ENCODE measurements at regions of chr10 and their contacts with region 1.

Region 1: DNA sequence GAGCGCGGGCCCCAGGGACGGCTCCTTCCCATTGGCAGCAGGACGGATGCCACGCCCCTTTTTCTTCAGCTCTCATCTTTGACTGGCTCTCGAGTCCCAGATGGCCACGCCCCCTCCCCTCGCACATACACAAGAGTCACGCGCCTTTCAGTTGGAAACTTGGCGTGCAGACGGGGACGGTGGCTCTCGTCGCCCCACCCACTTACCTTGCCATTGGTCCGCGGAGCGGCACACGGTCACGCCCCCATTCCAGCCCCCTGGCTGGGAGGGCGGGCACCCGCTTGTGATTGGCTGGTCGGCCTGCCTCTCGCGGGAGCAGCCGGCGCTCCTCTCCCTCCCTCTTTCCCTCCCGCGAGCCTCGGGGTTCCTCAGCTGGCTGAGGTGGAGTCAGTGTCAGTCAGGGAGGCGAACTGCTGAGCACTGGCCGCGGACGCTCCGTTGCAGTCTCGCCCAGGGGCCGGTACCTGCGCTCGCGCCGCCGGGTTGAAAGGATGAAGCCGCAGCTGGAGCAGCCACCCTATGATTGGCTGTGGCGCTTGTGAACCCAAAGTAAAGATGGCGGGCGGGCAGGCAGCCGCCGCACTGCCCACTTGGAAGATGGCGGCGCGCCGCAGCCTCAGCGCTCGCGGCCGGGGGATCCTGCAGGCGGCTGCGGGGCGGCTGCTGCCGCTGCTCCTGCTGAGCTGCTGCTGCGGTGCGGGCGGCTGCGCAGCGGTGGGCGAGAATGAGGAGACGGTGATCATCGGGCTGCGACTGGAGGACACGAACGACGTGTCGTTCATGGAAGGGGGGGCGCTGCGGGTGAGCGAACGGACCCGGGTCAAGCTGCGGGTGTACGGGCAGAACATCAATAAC is at the start of gene CNNM2:
- DNase-seq: peak; percentile 100
- H3K4me3 ChIP-seq: peak within 1 kb of the TSS; percentile 77 to 89 (median 83)
- H3K27ac ChIP-seq: peak within 1 kb of the TSS; percentile 91 to 93
- H3K4me1 ChIP-seq: peaks cover 0 to 14% (median 4%) of the 10 kb centered on the region in 3 donors
- H3K27me3 ChIP-seq: peaks cover 2% of the 10 kb centered on the region
- CTCF ChIP-seq: no peak
- total RNA-seq, gene CNNM2: 10.9 TPM

Region 2: DNA sequence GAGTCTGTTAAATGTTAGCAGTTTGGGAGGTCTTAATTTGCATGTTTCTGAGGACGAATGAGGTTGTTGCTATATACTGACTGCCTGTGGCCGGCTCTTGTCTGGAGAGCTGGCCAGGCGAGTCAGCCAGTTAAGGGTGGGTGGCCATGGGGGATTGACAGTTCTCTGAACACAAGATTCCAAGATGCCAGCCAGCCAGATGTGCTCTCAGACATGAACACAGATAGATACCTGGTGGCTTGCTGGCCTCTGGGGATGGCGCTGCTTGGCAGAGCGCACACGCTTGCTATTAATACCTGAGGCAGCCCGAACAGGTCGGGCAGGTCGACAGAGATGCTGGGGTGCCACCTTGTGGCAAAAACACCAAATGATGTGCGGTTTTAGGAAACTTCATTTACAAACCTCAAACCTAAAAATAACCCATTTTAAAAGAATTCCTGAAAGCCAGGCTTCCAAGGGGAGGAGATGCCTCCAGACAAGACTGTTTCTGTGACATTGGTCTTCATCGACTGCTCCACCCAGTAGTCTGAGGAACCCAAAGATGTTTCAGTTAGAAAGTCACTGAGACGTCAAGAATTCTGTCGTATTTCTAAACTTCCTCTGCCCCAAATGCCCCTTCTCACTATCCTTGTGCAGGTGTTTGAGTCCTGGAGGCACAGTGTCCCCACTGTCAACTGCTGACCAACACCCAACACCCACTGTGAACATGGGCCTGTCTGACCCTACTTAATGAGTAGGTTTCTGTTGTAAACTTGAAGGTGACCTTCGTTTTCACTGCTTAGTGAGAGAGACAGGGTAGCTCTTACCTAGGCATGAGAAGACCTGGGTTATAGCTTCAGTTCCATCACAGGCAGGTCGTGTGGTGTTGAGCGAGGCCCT is 151.5 kb after region 1 on chr10:
- intact Hi-C with region 1: loop called (anchors 5 kb)
- DNase-seq: peak in 4 of 5 donors; percentile 53 to 76 (median 72)
- H3K4me3 ChIP-seq: no peak overlapping the region
- H3K27ac ChIP-seq: peak overlapping the region; percentile 44 to 63
- H3K4me1 ChIP-seq: peaks cover 0 to 12% (median 0%) of the 10 kb centered on the region in 3 donors
- H3K27me3 ChIP-seq: no peaks in the 10 kb centered on the region
- CTCF ChIP-seq: peak; percentile 80

Region 3: DNA sequence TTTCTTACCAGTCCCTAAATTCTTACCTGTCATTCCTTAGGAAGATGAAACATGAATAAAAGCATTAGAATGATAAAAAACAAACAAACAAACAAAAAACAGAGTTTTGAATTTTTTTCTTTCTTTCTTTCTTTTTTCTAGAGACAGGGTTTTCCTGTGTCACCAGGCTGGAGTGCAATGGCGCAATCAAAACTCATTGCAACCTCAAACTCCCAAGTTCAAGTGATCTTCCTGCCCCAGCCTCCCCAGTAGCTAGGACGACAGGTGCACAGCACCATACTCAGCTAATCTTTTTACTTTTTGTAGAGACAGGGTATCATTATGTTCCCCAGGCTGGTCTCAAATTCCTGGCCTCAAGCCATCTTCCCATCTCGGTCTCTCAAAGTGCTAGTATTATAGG is 248.3 kb after region 1 on chr10:
- intact Hi-C with region 1: no loop called
- DNase-seq: no peak
- H3K4me3 ChIP-seq: no peak overlapping the region
- H3K27ac ChIP-seq: no peak overlapping the region
- H3K4me1 ChIP-seq: no peaks in the 10 kb centered on the region
- H3K27me3 ChIP-seq: no peaks in the 10 kb centered on the region
- CTCF ChIP-seq: no peak

Region 4: DNA sequence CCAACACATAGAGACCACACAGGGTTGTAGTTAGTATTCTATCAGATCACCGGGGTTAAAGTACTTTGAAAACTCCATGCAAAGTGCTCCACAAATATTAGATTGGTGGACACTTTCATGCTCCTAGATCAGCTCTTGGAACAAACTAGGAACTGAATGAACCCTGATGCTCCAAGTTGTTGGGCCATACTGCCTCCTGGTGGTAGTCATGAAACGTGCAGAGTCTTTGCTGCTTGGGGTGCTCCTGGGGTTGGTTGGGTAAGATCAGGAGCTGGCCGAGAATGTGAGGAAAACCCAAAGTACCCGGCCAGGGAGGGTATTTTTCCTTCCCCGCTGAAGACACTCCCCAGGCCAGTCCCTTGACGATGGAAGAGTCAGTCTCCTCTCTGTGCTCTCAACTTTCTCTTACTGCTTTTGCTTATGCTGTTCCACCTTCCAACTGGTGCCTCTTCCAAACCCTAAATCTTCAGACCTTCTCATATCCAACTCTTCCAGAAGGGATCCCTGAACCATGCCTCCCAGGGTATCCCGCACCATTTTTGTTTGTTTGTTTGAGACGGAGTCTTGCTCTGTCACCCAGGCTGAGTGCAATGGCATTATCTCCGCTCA is 326.6 kb after region 1 on chr10:
- intact Hi-C with region 1: loop called (anchors 10 kb)
- DNase-seq: peak in 4 of 5 donors; percentile 64 to 90 (median 74)
- H3K4me3 ChIP-seq: no peak overlapping the region
- H3K27ac ChIP-seq: no peak overlapping the region
- H3K4me1 ChIP-seq: peaks cover 0 to 13% (median 9%) of the 10 kb centered on the region in 3 donors
- H3K27me3 ChIP-seq: no peaks in the 10 kb centered on the region
- CTCF ChIP-seq: peak; percentile 91

Measured in kidney (tissue), 22 donors.